GM10248 (cell line): ENCODE measurements at regions of chr5 and their contacts with region 1.

Region 1: DNA sequence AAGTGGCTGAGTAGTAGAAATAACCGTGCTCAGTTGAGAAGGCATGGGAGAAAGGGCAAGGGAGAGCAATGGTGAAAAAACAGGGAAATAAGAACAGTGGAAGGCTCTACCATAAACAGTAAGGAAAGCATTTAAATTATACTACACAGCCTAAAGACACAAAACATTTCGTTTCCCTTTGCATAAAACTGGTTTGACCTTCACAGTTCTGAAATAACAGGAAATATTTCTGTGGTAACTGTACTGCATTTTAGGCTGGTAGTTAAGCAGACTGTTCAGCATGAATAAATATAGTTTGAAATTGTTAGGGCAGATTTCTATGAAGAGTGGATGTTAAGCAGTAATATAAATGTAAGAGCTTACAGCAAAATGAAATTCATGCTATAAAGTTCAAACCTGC is 147.5 kb downstream of the CSNK1G3 start:
- DNase-seq: no peak
- CTCF ChIP-seq: no peak

Region 2: DNA sequence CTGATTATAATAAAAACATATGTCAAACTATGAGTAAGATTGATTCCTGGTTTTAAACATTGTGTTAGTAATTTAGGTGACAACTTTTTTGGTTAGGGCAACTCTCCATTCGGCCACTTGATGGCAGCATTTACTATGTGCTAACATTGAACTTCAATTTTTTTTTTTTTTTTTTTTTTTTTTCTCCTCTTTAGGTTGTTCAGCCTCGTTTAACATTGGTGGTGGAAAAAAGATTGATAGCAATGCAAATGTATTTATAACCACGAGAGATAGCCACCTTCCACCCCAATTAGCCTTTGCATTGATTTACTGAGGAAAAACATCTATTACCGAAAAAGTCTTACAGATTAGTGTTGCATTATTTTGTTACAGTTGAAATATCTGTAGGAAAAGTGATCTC is 11.5 kb after region 1 on chr5:
- CTCF ChIA-PET with region 1: interaction called, 13 read pairs
- POLR2A ChIA-PET with region 1: no interaction called
- DNase-seq: peak; percentile 21
- CTCF ChIP-seq: peak; percentile 55